Mammary epithelial cell (primary cell): ENCODE measurements at regions of chr11 and their contacts with region 1.

Region 1: DNA sequence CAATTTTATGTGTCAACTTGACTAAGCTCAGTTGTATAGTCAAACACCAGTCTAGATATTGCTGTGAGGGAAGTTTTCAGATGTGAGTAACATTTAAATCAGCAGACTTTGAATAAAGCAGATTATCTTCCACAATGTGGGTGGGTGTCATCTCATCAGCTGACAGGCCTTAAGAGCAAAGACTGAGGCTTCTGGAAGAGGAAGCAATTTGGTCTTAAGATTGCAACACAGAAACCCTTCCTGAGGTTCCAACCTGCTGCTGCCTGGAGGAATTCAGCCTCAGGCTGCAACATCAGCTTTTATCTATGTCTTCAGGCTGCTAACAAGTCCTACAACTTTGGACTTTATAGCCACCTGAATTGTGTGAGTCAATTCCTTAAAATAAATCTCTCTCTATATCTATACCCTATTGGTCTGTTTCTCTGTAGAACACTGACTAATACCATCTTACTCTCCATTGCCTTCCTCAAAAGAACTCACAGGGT is 277.2 kb upstream of the PLET1 start:
- DNase-seq: peak; percentile 87
- H3K4me3 ChIP-seq: no peak overlapping the region
- H3K27ac ChIP-seq: no peak overlapping the region
- H3K4me1 ChIP-seq: peaks cover 21% of the 10 kb centered on the region
- H3K27me3 ChIP-seq: no peaks in the 10 kb centered on the region
- CTCF ChIP-seq: no peak

Region 2: GRCh38 chr11:112485280-112485679 is 52.6 kb before region 1 on chr11:
- CTCF ChIA-PET with region 1: no interaction called
- dilution Hi-C with region 1: no loop called
- in situ Hi-C with region 1: no loop called
- intact Hi-C with region 1: loop called (anchors 10 kb)
- DNase-seq: no peak
- H3K4me3 ChIP-seq: no peak overlapping the region
- H3K27ac ChIP-seq: no peak overlapping the region
- H3K4me1 ChIP-seq: no peaks in the 10 kb centered on the region
- H3K27me3 ChIP-seq: no peaks in the 10 kb centered on the region
- CTCF ChIP-seq: no peak

Region 3: DNA sequence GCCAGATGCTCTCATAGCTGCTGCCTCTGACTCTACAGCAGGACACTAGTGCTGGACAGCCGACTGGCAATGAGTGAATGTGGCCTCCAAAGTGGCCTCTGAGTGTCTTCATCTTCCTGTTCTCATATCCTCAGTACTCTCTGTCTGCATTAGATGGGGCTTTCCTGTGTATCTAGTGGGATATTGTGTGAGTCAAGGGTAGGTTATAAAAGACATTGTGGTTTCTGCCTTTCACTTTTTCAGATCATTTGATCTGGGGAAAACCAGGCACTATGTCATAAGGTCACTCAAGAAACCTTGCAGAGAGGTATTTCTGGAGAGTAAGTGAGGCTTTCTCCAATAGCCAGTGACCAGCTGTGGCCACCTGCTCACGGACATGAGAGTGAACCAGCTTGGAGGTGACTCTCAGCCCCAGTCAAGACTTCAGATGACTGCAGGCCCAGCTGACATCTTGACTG is 89.7 kb after region 1 on chr11:
- CTCF ChIA-PET with region 1: no interaction called
- dilution Hi-C with region 1: loop called (anchors 5 kb)
- in situ Hi-C with region 1: no loop called
- intact Hi-C with region 1: no loop called
- DNase-seq: peak; percentile 63
- H3K4me3 ChIP-seq: no peak overlapping the region
- H3K27ac ChIP-seq: no peak overlapping the region
- H3K4me1 ChIP-seq: peaks cover 22% of the 10 kb centered on the region
- H3K27me3 ChIP-seq: no peaks in the 10 kb centered on the region
- CTCF ChIP-seq: no peak